A549 (cell line): ENCODE measurements at regions of chr12 and their contacts with region 1.

Region 1: GRCh38 chr12:98516184-98516873 is 939 bp downstream of the TMPO start:
- DNase-seq: peak; percentile 74 to 95
- ATAC-seq: peak; percentile 63 to 64
- H3K4me3 ChIP-seq: peak overlapping the region; percentile 78
- H3K27ac ChIP-seq: peak overlapping the region; percentile 94 to 97
- H3K4me1 ChIP-seq: peaks cover 40% of the 10 kb centered on the region
- CTCF ChIP-seq: peak; percentile 84
- EP300 ChIP-seq: no peak
- POLR2A ChIP-seq: peak; percentile 18; the same call in 1 of the 2 replicates
- RAD21 ChIP-seq: peak; percentile 80 to 84

Region 2: GRCh38 chr12:98418357-98419075 is 97.8 kb before region 1 on chr12:
- CTCF ChIA-PET with region 1: interaction called, 26 read pairs
- POLR2A ChIA-PET with region 1: interaction called, 5 read pairs
- DNase-seq: peak; percentile 55 to 86
- ATAC-seq: peak; percentile 68 to 85
- H3K4me3 ChIP-seq: no peak overlapping the region
- H3K27ac ChIP-seq: peak overlapping the region; percentile 33 to 76; a peak in 4 of 6 replicates
- H3K4me1 ChIP-seq: peaks cover 34% of the 10 kb centered on the region
- CTCF ChIP-seq: no peak
- EP300 ChIP-seq: no peak
- POLR2A ChIP-seq: no peak
- RAD21 ChIP-seq: no peak

Region 3: DNA sequence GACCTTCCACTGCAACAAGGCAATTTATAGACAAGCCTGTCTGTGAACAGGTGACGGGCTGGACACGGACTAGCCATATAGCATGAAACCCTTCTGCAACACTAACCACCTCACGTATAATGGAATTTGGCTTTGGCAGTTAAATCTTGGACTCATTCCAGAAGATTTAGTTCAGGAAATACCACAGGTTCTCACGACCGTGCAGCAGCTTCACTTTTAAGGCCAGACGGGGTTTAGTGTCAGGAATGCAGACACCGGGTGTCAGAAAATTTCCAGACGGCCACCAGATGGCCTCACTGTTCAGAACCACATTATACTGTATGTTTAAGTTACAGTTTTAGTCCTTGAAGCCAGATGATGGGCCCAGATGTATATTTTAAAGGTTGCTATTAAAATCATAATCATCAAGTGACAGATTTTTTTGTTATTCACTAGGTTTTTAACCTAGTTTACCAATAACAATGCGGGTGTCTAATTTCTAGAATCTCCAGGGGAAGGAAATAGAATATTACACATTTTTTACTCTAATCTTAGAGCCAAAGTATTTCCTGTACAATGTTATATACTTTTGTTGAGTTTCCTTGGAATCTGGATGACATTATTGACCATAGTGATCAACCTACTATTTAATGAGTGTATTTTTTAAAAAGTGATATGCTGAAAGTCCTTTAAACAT is 91.5 kb before region 1 on chr12:
- CTCF ChIA-PET with region 1: interaction called, 27 read pairs
- POLR2A ChIA-PET with region 1: interaction called, 3 read pairs
- DNase-seq: peak; percentile 74 to 76
- ATAC-seq: peak; percentile 90 to 91
- H3K4me3 ChIP-seq: no peak overlapping the region
- H3K27ac ChIP-seq: peak overlapping the region in 1 of 2 experiments; percentile 50; a peak in 1 of 6 replicates
- H3K4me1 ChIP-seq: peaks cover 12% of the 10 kb centered on the region
- CTCF ChIP-seq: peak; percentile 86
- EP300 ChIP-seq: no peak
- POLR2A ChIP-seq: no peak
- RAD21 ChIP-seq: peak; percentile 72 to 82

Region 4: DNA sequence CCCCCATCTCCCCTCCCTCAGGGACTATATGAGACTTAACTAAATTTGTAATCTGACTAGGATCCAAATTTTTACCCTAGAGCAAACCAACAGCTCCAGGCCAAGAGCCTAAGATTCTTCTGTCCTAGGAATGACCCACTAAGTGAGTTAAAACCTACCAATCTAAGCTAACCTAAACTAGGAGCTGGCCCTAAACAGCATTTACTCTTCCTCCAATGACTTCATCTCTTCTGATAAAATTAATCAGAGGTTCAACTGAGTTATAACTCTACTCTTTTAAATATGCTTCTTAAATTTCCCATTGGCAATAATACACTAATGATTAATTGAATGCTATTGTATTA is 40.8 kb before region 1 on chr12:
- CTCF ChIA-PET with region 1: interaction called, 10 read pairs
- POLR2A ChIA-PET with region 1: no interaction called
- DNase-seq: no peak
- ATAC-seq: peak; percentile 71 to 73; a peak in 5 of 6 replicates
- H3K4me3 ChIP-seq: no peak overlapping the region
- H3K27ac ChIP-seq: peak overlapping the region; percentile 71 to 95
- H3K4me1 ChIP-seq: peaks cover 21% of the 10 kb centered on the region
- CTCF ChIP-seq: no peak
- EP300 ChIP-seq: no peak
- POLR2A ChIP-seq: no peak
- RAD21 ChIP-seq: no peak; a peak in 1 of 5 replicates

Region 5: DNA sequence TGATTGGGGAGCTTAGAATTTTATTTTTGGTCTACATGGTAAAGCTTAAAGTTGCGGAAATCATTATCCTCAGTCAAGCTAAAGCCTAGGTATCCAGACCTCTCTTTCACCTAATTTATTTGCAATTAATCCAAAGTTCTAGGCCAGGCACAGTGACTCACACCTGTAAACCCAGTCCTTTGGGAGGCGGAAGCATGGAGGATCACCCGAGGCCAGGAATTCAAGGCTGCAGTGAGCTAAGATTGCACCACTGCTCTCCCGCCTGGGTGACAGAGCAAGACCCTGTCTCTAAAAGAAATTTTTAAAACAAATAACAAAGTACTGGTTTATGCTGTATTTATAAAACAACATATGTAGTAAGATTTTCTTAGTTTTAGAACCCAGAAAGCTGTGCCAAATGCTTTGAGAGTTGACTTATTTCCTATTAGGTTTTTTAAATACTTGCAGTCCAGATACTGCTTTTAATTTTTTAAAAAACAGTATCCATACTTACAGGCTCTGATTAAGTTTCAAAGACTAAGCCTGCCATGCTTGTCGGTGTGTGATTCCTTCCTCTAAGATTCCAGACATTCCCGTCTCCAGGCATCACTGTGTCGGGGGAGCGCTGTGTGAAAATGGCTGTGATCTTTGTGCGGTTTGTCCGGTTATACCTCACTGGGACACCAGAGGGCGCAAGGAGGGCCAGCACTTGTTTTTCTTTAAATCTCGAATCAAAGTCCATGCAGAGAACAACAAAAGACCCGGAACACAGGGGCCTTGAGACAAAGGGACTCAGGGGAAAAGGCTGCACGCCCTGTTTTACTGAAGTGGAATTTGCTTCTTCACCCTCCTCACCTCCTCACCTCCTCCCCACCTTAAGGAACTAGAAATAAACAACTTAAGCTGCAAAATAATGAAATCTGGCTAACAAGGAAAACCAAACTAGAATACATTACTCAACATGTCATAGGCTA is 25.6 kb before region 1 on chr12:
- CTCF ChIA-PET with region 1: interaction called, 61 read pairs
- POLR2A ChIA-PET with region 1: interaction called, 12 read pairs
- DNase-seq: peak; percentile 67 to 94
- ATAC-seq: peak; percentile 96 to 98
- H3K4me3 ChIP-seq: peak overlapping the region; percentile 33; the same call in 2 of the 3 replicates
- H3K27ac ChIP-seq: peak overlapping the region; percentile 86 to 90
- H3K4me1 ChIP-seq: peaks cover 16% of the 10 kb centered on the region
- CTCF ChIP-seq: peak; percentile 83
- EP300 ChIP-seq: no peak
- POLR2A ChIP-seq: no peak
- RAD21 ChIP-seq: peak; percentile 75 to 76

Region 6: DNA sequence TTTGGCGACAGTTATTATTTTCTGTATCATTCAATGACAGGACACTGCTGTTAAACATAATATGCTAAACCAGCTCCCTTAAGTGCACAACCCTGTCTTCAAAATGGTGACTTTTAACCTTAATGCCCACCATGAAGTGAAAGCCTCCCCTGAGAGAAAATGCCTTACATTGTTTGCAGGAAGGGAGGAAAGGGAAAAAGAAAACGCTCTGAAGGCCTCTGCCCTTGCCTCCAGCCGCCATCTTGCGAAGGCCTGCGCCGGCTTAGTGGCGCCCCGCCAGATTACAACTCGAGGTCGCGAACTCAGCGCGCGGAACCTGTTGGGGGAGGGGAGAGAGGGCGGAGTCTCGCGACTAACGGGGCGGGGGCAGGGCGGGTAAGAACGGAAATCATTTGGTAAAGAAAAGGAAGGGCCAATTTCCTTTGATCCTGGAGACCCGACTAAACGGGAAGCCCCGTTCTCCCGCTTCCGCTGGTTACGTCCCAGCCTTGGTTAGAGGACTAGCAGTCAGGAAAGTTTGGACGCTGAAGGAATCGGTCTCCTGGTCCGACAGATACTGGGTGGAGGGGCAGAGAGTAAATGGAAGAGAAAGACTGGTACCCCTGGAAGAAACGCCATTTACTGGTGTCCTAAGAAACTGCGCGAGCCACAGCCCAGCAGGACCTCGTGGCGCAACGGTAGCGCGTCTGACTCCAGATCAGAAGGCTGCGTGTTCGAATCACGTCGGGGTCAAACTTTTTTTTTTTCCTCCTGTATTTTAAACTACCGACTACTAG is 12.5 kb before region 1 on chr12:
- CTCF ChIA-PET with region 1: interaction called, 20 read pairs
- POLR2A ChIA-PET with region 1: interaction called, 10 read pairs
- DNase-seq: peak; percentile 73 to 98
- ATAC-seq: peak; percentile 71 to 75
- H3K4me3 ChIP-seq: peak overlapping the region; percentile 55
- H3K27ac ChIP-seq: peak overlapping the region; percentile 94
- H3K4me1 ChIP-seq: peaks cover 23% of the 10 kb centered on the region
- CTCF ChIP-seq: no peak
- EP300 ChIP-seq: no peak
- POLR2A ChIP-seq: peak; percentile 44; the same call in 1 of the 2 replicates
- RAD21 ChIP-seq: no peak; a peak in 1 of 5 replicates

Region 7: DNA sequence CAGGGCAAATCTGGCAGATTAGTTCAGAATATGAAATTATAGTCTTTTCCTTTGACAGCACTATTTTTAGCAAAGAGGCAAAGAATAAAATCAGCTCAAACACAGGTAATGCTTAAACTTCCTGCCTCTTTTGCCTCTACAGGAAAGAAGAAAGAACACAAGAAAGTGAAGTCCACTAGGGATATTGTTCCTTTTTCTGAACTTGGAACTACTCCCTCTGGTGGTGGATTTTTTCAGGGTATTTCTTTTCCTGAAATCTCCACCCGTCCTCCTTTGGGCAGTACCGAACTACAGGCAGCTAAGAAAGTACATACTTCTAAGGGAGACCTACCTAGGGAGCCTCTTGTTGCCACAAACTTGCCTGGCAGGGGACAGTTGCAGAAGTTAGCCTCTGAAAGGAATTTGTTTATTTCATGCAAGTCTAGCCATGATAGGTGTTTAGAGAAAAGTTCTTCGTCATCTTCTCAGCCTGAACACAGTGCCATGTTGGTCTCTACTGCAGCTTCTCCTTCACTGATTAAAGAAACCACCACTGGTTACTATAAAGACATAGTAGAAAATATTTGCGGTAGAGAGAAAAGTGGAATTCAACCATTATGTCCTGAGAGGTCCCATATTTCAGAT is 16.5 kb after region 1 on chr12:
- CTCF ChIA-PET with region 1: interaction called, 46 read pairs
- POLR2A ChIA-PET with region 1: no interaction called
- DNase-seq: peak; percentile 49 to 79
- ATAC-seq: peak; percentile 91 to 93
- H3K4me3 ChIP-seq: no peak overlapping the region
- H3K27ac ChIP-seq: peak overlapping the region; percentile 1 to 64; a peak in 3 of 6 replicates
- H3K4me1 ChIP-seq: peaks cover 19% of the 10 kb centered on the region; the same call in 2 of the 3 replicates
- CTCF ChIP-seq: peak; percentile 83
- EP300 ChIP-seq: no peak
- POLR2A ChIP-seq: no peak
- RAD21 ChIP-seq: peak; percentile 37 to 45; a peak in 4 of 5 replicates